GM12878 (cell line): ENCODE measurements at regions of chr2 and their contacts with region 1.

Region 1: GRCh38 chr2:47334356-47335136 is 68.4 kb upstream of the MSH2 start:
- DNase-seq: no peak
- ATAC-seq: peak; percentile 35
- H3K4me3 ChIP-seq: peak overlapping the region; percentile 23; the same call in 1 of the 2 replicates
- H3K27ac ChIP-seq: no peak overlapping the region; the same call in 1 of the 2 replicates
- H3K4me1 ChIP-seq: peaks cover 25% of the 10 kb centered on the region
- H3K27me3 ChIP-seq: no peaks in the 10 kb centered on the region
- CTCF ChIP-seq: no peak
- EP300 ChIP-seq: no peak
- POLR2A ChIP-seq: no peak
- RAD21 ChIP-seq: no peak

Region 2: DNA sequence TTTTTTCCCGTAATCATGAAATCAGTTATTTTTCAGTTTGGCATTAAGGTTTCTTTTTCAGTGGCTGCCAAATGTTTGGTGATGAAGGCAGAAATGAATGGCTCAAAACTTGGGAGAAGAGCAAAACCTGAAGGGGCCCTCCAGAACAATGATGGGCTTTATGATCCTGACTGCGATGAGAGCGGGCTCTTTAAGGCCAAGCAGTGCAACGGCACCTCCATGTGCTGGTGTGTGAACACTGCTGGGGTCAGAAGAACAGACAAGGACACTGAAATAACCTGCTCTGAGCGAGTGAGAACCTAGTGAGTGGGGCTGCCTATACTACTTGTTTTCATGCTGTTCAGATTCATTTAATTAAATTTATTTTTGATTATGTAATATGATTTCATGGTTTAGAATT is 39.2 kb after region 1 on chr2:
- CTCF ChIA-PET with region 1: interaction called, 18 read pairs
- POLR2A ChIA-PET with region 1: interaction called, 3 read pairs
- RAD21 ChIA-PET with region 1: interaction called, 3 read pairs
- SMC1A ChIA-PET with region 1: interaction called, 16 read pairs
- in situ Hi-C with region 1: no loop called
- intact Hi-C with region 1: no loop called
- DNase-seq: no peak
- ATAC-seq: peak; percentile 19; the same call in 1 of the 3 replicates
- H3K4me3 ChIP-seq: no peak overlapping the region
- H3K27ac ChIP-seq: no peak overlapping the region
- H3K4me1 ChIP-seq: no peaks in the 10 kb centered on the region
- H3K27me3 ChIP-seq: peaks cover 0 to 3% of the 10 kb centered on the region in 2 experiments; a peak in 2 of 4 replicates
- CTCF ChIP-seq: no peak
- EP300 ChIP-seq: no peak
- POLR2A ChIP-seq: no peak
- RAD21 ChIP-seq: no peak

Region 3: DNA sequence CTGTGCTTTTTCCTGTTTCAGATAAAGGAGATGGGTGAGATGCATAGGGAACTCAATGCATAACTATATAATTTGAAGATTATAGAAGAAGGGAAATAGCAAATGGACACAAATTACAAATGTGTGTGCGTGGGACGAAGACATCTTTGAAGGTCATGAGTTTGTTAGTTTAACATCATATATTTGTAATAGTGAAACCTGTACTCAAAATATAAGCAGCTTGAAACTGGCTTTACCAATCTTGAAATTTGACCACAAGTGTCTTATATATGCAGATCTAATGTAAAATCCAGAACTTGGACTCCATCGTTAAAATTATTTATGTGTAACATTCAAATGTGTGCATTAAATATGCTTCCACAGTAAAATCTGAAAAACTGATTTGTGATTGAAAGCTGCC is 52.0 kb after region 1 on chr2:
- CTCF ChIA-PET with region 1: interaction called, 273 read pairs
- POLR2A ChIA-PET with region 1: interaction called, 7 read pairs
- RAD21 ChIA-PET with region 1: interaction called, 136 read pairs
- SMC1A ChIA-PET with region 1: interaction called, 106 read pairs
- in situ Hi-C with region 1: loop called (anchors 5 kb)
- intact Hi-C with region 1: loop called (anchors 1 kb)
- DNase-seq: no peak
- ATAC-seq: peak; percentile 61
- H3K4me3 ChIP-seq: no peak overlapping the region
- H3K27ac ChIP-seq: no peak overlapping the region
- H3K4me1 ChIP-seq: peaks cover 3% of the 10 kb centered on the region; the same call in 1 of the 2 replicates
- H3K27me3 ChIP-seq: peaks cover 0 to 3% of the 10 kb centered on the region in 2 experiments; a peak in 1 of 4 replicates
- CTCF ChIP-seq: no peak
- EP300 ChIP-seq: no peak
- POLR2A ChIP-seq: no peak
- RAD21 ChIP-seq: no peak